Naive thymus-derived CD4-positive, alpha-beta T cell (primary cell): ENCODE measurements at regions of chr16 and their contacts with region 1.

Region 1: GRCh38 chr16:47460711-47461597 is at the starts of genes ITFG1 and PHKB:
- DNase-seq: peak; percentile 94 to 98 (median 97)
- ATAC-seq: peak; percentile 97
- H3K4me3 ChIP-seq: peak within 1 kb of the TSS; percentile 94
- H3K4me3 Mint-ChIP-seq: peak within 1 kb of the TSS; percentile 91 to 100 (median 96)
- H3K27ac ChIP-seq: peak within 1 kb of the TSS; percentile 95
- H3K27ac Mint-ChIP-seq: peak within 1 kb of the TSS; percentile 91 to 99 (median 96)
- H3K4me1 ChIP-seq: peaks cover 10 to 21% of the 10 kb centered on the region in 2 donors
- H3K4me1 Mint-ChIP-seq: peaks cover 45 to 79% (median 73%) of the 10 kb centered on the region in 7 donors
- H3K27me3 ChIP-seq: no peaks in the 10 kb centered on the region
- H3K27me3 Mint-ChIP-seq: no peaks in the 10 kb centered on the region
- total RNA-seq, gene ITFG1: 21.7 to 34.3 (median 29.8) TPM
- total RNA-seq, gene PHKB: 48.5 to 82.9 (median 50.7) TPM

Region 2: GRCh38 chr16:46621006-46621933 is 839.7 kb before region 1 on chr16 and contains the start of gene SHCBP1:
- CTCF ChIA-PET with region 1: no interaction called
- POLR2A ChIA-PET with region 1: no interaction called
- intact Hi-C with region 1: loop called in 1 of 2 experiments (anchors 5 kb)
- DNase-seq: peak; percentile 10 to 82 (median 34)
- ATAC-seq: peak; percentile 87
- H3K4me3 ChIP-seq: peak within 1 kb of the TSS; percentile 62
- H3K4me3 Mint-ChIP-seq: peak within 1 kb of the TSS; percentile 83 to 98 (median 88)
- H3K27ac ChIP-seq: no peak within 1 kb of the TSS
- H3K27ac Mint-ChIP-seq: peak within 1 kb of the TSS in 6 of 9 donors; percentile 8 to 98 (median 56)
- H3K4me1 ChIP-seq: peaks cover 3% of the 10 kb centered on the region in 2 donors
- H3K4me1 Mint-ChIP-seq: peaks cover 13 to 34% (median 22%) of the 10 kb centered on the region in 7 donors
- H3K27me3 ChIP-seq: no peaks in the 10 kb centered on the region
- H3K27me3 Mint-ChIP-seq: peaks cover 0 to 13% (median 0%) of the 10 kb centered on the region in 5 donors
- total RNA-seq, gene SHCBP1: 0.32 to 37.8 (median 1.1) TPM

Region 3: DNA sequence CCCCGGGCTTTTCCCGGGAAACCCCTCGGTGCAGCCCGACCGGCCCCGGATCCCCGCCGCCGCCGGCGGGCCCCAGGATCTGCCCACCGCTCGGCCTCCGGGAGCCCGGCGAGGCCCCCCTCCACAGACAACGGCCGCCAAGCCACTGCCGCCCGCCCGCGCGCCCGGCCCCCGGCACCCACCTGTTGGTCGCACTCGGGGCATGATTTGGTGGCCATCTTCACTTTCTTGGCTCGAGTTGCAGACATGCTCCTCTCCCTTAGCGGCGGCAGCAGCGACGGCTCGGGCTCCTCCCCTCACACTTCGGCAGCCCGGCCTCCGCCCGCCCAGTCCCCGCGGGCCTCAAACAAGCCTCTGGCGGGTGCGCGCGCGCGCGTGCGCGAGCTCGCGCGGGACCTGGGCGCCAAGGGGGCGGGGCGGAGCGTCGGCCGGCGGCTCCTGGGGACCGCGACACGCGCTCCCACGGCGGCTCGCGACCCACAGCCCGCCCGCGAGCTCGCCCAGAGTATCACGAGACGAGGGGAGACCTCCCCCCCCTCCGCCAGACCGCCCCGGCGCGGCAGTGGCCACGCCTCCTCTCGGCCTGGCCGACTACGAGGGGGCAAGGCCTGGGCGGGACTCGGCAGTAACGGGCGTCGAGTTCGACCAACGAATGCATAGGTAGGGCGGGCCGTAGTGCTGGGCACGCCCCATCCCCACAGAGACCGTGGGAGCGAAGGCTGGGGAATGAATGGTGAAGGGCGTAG is 629.9 kb before region 1 on chr16 and contains the start of gene C16orf87:
- CTCF ChIA-PET with region 1: no interaction called
- POLR2A ChIA-PET with region 1: no interaction called
- intact Hi-C with region 1: loop called in 1 of 2 experiments (anchors 1 kb)
- DNase-seq: peak; percentile 88 to 95 (median 91)
- ATAC-seq: peak; percentile 96
- H3K4me3 ChIP-seq: peak within 1 kb of the TSS; percentile 46
- H3K4me3 Mint-ChIP-seq: peak within 1 kb of the TSS; percentile 94 to 99 (median 96)
- H3K27ac ChIP-seq: peak within 1 kb of the TSS; percentile 81
- H3K27ac Mint-ChIP-seq: peak within 1 kb of the TSS; percentile 90 to 98 (median 95)
- H3K4me1 ChIP-seq: peaks cover 9 to 12% of the 10 kb centered on the region in 2 donors
- H3K4me1 Mint-ChIP-seq: peaks cover 21 to 35% (median 29%) of the 10 kb centered on the region in 7 donors
- H3K27me3 ChIP-seq: no peaks in the 10 kb centered on the region
- H3K27me3 Mint-ChIP-seq: peaks cover 0 to 21% (median 0%) of the 10 kb centered on the region in 5 donors
- total RNA-seq, gene C16orf87: 5.6 to 14.0 (median 12.7) TPM

Region 4: DNA sequence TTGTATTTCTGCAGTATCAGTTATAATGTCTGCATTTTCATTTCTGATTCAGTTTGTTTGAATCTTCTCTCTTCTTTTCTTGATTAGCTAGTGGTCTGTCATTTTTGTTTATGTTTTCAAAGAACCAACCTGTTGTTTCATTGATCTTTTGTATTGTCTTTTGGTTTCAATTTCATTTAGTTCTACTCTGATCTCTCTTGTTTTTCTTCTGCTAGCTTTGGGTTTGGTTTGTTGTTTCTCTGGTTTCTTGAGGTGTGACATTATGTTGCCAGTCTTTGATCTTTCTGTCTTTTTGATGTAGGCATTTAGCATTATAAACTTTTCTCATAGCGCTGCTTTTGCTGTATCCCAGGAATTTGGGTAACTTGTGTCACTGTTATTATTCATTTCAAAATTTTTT is 107.4 kb after region 1 on chr16:
- CTCF ChIA-PET with region 1: interaction called, 3 read pairs
- POLR2A ChIA-PET with region 1: no interaction called
- intact Hi-C with region 1: loop called in 1 of 2 experiments (anchors 1 kb)
- DNase-seq: peak in 3 of 9 donors; percentile 12 to 49 (median 38)
- ATAC-seq: peak; percentile 48
- H3K4me3 ChIP-seq: peak overlapping the region; percentile 0
- H3K4me3 Mint-ChIP-seq: peak overlapping the region; percentile 7 to 84 (median 64)
- H3K27ac ChIP-seq: peak overlapping the region; percentile 2
- H3K27ac Mint-ChIP-seq: peak overlapping the region; percentile 56 to 91 (median 71)
- H3K4me1 ChIP-seq: peaks cover 21 to 27% of the 10 kb centered on the region in 2 donors
- H3K4me1 Mint-ChIP-seq: peaks cover 61 to 79% (median 72%) of the 10 kb centered on the region in 7 donors
- H3K27me3 ChIP-seq: no peaks in the 10 kb centered on the region
- H3K27me3 Mint-ChIP-seq: no peaks in the 10 kb centered on the region

Region 5: GRCh38 chr16:48244080-48244862 is 783.3 kb after region 1 on chr16 and contains the start of gene LONP2:
- CTCF ChIA-PET with region 1: no interaction called
- POLR2A ChIA-PET with region 1: no interaction called
- intact Hi-C with region 1: loop called (anchors 1 kb)
- DNase-seq: peak; percentile 79 to 97 (median 93)
- ATAC-seq: peak; percentile 99
- H3K4me3 ChIP-seq: peak within 1 kb of the TSS; percentile 78
- H3K4me3 Mint-ChIP-seq: peak within 1 kb of the TSS; percentile 93 to 100 (median 96)
- H3K27ac ChIP-seq: peak within 1 kb of the TSS; percentile 78
- H3K27ac Mint-ChIP-seq: peak within 1 kb of the TSS; percentile 89 to 98 (median 96)
- H3K4me1 ChIP-seq: peaks cover 25 to 27% of the 10 kb centered on the region in 2 donors
- H3K4me1 Mint-ChIP-seq: peaks cover 29 to 56% (median 45%) of the 10 kb centered on the region in 7 donors
- H3K27me3 ChIP-seq: no peaks in the 10 kb centered on the region
- H3K27me3 Mint-ChIP-seq: no peaks in the 10 kb centered on the region
- total RNA-seq, gene LONP2: 62.3 to 124 (median 83.0) TPM